CD4-positive, alpha-beta memory T cell (primary cell): ENCODE measurements at regions of chr7 and their contacts with region 1.

Region 1: GRCh38 chr7:105759670-105760550 is 116.5 kb downstream of the ATXN7L1 start:
- DNase-seq: peak in 2 of 5 donors; percentile 23 to 34
- H3K4me3 ChIP-seq: no peak overlapping the region
- H3K4me3 Mint-ChIP-seq: peak overlapping the region in 4 of 8 donors; percentile 8 to 67 (median 23)
- H3K27ac ChIP-seq: no peak overlapping the region
- H3K27ac Mint-ChIP-seq: peak overlapping the region in 6 of 7 donors; percentile 38 to 94 (median 78)
- H3K4me1 ChIP-seq: peaks cover 39% of the 10 kb centered on the region
- H3K4me1 Mint-ChIP-seq: peaks cover 33 to 49% (median 39%) of the 10 kb centered on the region in 4 donors
- H3K27me3 ChIP-seq: no peaks in the 10 kb centered on the region
- H3K27me3 Mint-ChIP-seq: no peaks in the 10 kb centered on the region

Region 2: GRCh38 chr7:105652359-105652993 is 107.4 kb before region 1 on chr7:
- CTCF ChIA-PET with region 1: interaction called, 51 read pairs
- POLR2A ChIA-PET with region 1: interaction called, 6 read pairs
- intact Hi-C with region 1: loop called (anchors 1 kb)
- DNase-seq: peak; percentile 46 to 59 (median 52)
- H3K4me3 ChIP-seq: no peak overlapping the region
- H3K4me3 Mint-ChIP-seq: no peak overlapping the region
- H3K27ac ChIP-seq: no peak overlapping the region
- H3K27ac Mint-ChIP-seq: peak overlapping the region in 2 of 7 donors; percentile 1 to 24
- H3K4me1 ChIP-seq: peaks cover 7% of the 10 kb centered on the region
- H3K4me1 Mint-ChIP-seq: peaks cover 12 to 28% (median 16%) of the 10 kb centered on the region in 4 donors
- H3K27me3 ChIP-seq: no peaks in the 10 kb centered on the region
- H3K27me3 Mint-ChIP-seq: no peaks in the 10 kb centered on the region

Region 3: DNA sequence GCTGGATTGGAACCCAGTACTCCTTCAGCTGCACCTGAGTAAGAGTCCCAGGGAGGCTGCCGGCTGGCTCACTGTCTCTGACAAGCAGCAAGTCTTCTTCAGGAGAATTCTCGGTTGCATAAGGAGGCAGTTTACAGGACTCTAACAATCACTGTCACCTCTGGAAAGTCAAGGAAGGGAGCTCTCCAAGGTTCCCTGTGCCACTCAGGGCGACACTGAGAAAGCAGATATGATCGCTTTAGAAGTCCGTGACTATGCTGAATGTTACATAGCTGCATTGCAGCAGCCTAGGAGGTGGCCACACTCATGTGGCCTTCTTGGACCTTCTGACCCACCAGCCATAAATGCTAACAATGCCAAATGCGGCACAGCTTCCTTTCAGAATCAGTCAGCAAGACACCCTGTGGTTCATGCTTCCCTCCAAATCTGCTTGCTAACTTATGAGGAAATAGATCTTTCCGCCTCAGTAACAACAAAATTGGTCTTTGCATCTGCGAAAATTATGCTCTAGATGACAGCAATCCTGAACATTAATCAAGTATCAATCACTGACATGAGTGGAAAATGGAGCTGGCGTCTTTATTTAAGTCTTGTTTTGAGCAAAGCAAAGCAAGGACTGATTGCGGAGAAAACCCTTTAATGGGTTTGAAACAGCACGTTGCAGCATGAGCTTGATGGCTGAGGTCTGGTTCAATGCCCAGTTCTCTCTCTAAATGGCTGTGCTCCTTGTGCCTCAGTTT is 16.4 kb before region 1 on chr7:
- CTCF ChIA-PET with region 1: interaction called, 12 read pairs
- POLR2A ChIA-PET with region 1: interaction called, 3 read pairs
- intact Hi-C with region 1: no loop called
- DNase-seq: no peak
- H3K4me3 ChIP-seq: no peak overlapping the region
- H3K4me3 Mint-ChIP-seq: no peak overlapping the region
- H3K27ac ChIP-seq: no peak overlapping the region
- H3K27ac Mint-ChIP-seq: peak overlapping the region in 2 of 7 donors; percentile 18 to 58
- H3K4me1 ChIP-seq: peaks cover 4% of the 10 kb centered on the region
- H3K4me1 Mint-ChIP-seq: peaks cover 13 to 33% (median 18%) of the 10 kb centered on the region in 4 donors
- H3K27me3 ChIP-seq: no peaks in the 10 kb centered on the region
- H3K27me3 Mint-ChIP-seq: no peaks in the 10 kb centered on the region

Region 4: DNA sequence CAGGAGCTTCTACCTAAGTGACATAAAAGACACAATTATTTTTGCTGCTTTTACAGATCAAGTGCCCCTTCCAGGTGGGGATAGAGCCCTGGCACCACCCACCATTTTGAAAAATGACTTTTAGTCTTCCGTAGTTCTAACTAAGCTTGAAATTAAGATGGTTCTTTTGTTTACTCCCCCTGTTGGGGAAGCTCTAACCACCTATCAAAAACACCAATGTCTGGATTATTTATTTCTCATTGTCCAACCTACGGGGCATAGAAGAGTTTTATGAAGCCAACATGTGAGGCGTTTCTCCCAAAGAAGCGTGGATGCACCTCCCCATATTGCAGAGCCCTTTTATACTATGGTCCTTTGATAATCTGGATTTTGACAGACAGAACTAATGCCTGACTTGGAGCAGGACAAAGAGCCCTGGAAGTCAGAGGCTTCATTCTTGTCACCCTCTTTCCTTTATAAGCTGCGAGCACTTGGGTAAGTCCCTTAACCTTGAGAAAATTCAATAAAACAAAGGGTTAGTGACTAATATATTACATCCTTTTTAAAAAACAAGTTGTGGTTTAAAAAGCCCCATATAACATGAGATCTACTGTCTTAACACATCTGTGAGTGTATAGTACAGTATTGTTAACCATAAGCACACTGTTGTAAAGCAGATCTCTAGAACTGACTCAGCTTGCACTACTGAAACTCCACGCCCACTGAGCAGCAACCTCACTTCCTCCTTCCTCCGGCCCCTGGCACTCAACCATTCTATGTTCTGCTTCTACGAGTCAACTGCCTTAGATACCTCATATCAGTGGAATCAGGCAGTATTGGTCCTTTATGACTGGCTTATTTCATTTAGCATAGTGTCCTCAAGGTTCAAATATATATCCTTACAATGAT is 49.0 kb after region 1 on chr7:
- CTCF ChIA-PET with region 1: interaction called, 19 read pairs
- POLR2A ChIA-PET with region 1: interaction called, 9 read pairs
- intact Hi-C with region 1: loop called (anchors 2 kb)
- DNase-seq: peak; percentile 60 to 81 (median 62)
- H3K4me3 ChIP-seq: peak overlapping the region in 1 of 2 donors; percentile 30
- H3K4me3 Mint-ChIP-seq: peak overlapping the region; percentile 2 to 88 (median 55)
- H3K27ac ChIP-seq: peak overlapping the region; percentile 60
- H3K27ac Mint-ChIP-seq: peak overlapping the region; percentile 52 to 92 (median 80)
- H3K4me1 ChIP-seq: peaks cover 56% of the 10 kb centered on the region
- H3K4me1 Mint-ChIP-seq: peaks cover 45 to 65% (median 54%) of the 10 kb centered on the region in 4 donors
- H3K27me3 ChIP-seq: no peaks in the 10 kb centered on the region
- H3K27me3 Mint-ChIP-seq: no peaks in the 10 kb centered on the region

Region 5: GRCh38 chr7:105885387-105886111 is 125.6 kb after region 1 on chr7:
- CTCF ChIA-PET with region 1: interaction called, 17 read pairs
- POLR2A ChIA-PET with region 1: interaction called, 5 read pairs
- intact Hi-C with region 1: no loop called
- DNase-seq: no peak
- H3K4me3 ChIP-seq: no peak overlapping the region
- H3K4me3 Mint-ChIP-seq: peak overlapping the region in 3 of 8 donors; percentile 4 to 22 (median 17)
- H3K27ac ChIP-seq: no peak overlapping the region
- H3K27ac Mint-ChIP-seq: peak overlapping the region in 1 of 7 donors; percentile 82
- H3K4me1 ChIP-seq: peaks cover 23% of the 10 kb centered on the region
- H3K4me1 Mint-ChIP-seq: peaks cover 17 to 47% (median 31%) of the 10 kb centered on the region in 4 donors
- H3K27me3 ChIP-seq: no peaks in the 10 kb centered on the region
- H3K27me3 Mint-ChIP-seq: no peaks in the 10 kb centered on the region

Region 6: GRCh38 chr7:106022193-106022821 is 262.4 kb after region 1 on chr7:
- CTCF ChIA-PET with region 1: interaction called, 25 read pairs
- POLR2A ChIA-PET with region 1: interaction called, 23 read pairs
- intact Hi-C with region 1: loop called (anchors 1 kb)
- DNase-seq: peak; percentile 89 to 92 (median 91)
- H3K4me3 ChIP-seq: peak overlapping the region in 1 of 2 donors; percentile 48
- H3K4me3 Mint-ChIP-seq: peak overlapping the region; percentile 5 to 82 (median 72)
- H3K27ac ChIP-seq: peak overlapping the region; percentile 48
- H3K27ac Mint-ChIP-seq: peak overlapping the region; percentile 88 to 99 (median 98)
- H3K4me1 ChIP-seq: peaks cover 52% of the 10 kb centered on the region
- H3K4me1 Mint-ChIP-seq: peaks cover 38 to 70% (median 48%) of the 10 kb centered on the region in 4 donors
- H3K27me3 ChIP-seq: no peaks in the 10 kb centered on the region
- H3K27me3 Mint-ChIP-seq: no peaks in the 10 kb centered on the region